ENCODE measurements at regions of chr1 and their contacts with region 1.

Region 1: GRCh38 chr1:12434174-12434573 is 183.8 kb downstream of the DHRS3 start:
- DNase-seq: peak; percentile 93
- ATAC-seq: peak; percentile 21
- H3K4me3 Mint-ChIP-seq: peak overlapping the region; percentile 65
- H3K27ac Mint-ChIP-seq: peak overlapping the region; percentile 96
- H3K4me1 Mint-ChIP-seq: peaks cover 87% of the 10 kb centered on the region
- H3K27me3 Mint-ChIP-seq: peaks cover 2% of the 10 kb centered on the region
- CTCF ChIP-seq: no peak

Region 2: GRCh38 chr1:12407050-12407961 is 26.9 kb before region 1 on chr1:
- CTCF ChIA-PET with region 1: interaction called, 13 read pairs
- POLR2A ChIA-PET with region 1: interaction called, 6 read pairs
- intact Hi-C with region 1: no loop called
- DNase-seq: peak; percentile 44
- ATAC-seq: peak; percentile 93
- H3K4me3 Mint-ChIP-seq: no peak overlapping the region
- H3K27ac Mint-ChIP-seq: peak overlapping the region; percentile 57
- H3K4me1 Mint-ChIP-seq: peaks cover 36% of the 10 kb centered on the region
- H3K27me3 Mint-ChIP-seq: no peaks in the 10 kb centered on the region
- CTCF ChIP-seq: peak; percentile 48

Region 3: GRCh38 chr1:12424087-12424529 is 10.1 kb before region 1 on chr1:
- CTCF ChIA-PET with region 1: interaction called, 5 read pairs
- POLR2A ChIA-PET with region 1: interaction called, 15 read pairs
- intact Hi-C with region 1: no loop called
- DNase-seq: no peak
- ATAC-seq: peak; percentile 37
- H3K4me3 Mint-ChIP-seq: no peak overlapping the region
- H3K27ac Mint-ChIP-seq: peak overlapping the region; percentile 48
- H3K4me1 Mint-ChIP-seq: peaks cover 48% of the 10 kb centered on the region
- H3K27me3 Mint-ChIP-seq: no peaks in the 10 kb centered on the region
- CTCF ChIP-seq: no peak

Region 4: DNA sequence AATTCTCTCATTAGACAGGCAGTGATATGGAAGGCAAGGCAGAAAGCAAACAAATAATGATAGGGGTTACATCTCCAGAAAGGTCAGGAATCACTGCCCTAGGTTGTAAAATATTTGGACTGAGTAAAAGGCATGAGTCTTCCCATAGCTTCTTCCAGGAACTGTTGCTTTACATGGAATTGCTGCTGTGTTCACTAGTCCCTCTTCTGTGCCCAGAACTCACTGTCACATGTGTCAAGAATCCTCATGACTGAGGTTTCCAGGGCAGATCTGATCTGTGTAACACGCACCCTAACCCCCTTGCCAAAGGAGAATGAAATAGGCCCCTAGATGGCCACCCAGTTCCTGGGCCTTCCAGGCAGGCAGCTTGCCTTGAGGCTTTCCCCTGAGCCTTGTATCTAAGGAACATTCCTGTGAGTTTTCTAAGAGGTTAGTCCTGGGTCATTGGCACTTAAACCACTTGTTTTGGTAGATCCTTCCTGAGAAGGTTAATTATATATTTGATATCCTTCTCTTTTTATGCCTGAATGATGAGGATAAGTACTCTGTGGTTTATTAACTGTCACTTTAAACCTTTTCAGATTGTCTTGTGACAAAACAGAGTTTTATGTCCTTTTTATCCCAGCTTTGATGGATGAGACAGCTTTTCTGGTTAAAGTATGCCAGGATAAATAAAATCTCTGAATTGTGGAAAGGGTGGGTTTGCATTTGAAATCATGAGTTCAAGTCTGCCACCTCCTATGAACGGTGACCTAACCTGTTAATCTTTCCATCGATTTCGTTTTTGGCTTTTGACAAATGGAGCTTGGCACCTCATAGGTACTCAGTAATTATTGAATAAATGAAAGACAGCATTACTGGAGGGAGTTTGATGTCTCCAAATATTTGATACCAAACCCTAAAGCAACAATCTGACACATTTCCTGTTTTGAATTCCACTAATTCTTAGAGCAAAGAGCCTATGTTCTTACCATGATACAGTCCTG is 20.5 kb after region 1 on chr1:
- CTCF ChIA-PET with region 1: interaction called, 88 read pairs
- POLR2A ChIA-PET with region 1: interaction called, 141 read pairs
- intact Hi-C with region 1: loop called (anchors 1 kb)
- DNase-seq: no peak
- ATAC-seq: no peak
- H3K4me3 Mint-ChIP-seq: peak overlapping the region; percentile 10
- H3K27ac Mint-ChIP-seq: peak overlapping the region; percentile 94
- H3K4me1 Mint-ChIP-seq: peaks cover 87% of the 10 kb centered on the region
- H3K27me3 Mint-ChIP-seq: no peaks in the 10 kb centered on the region
- CTCF ChIP-seq: no peak

Region 5: GRCh38 chr1:12477936-12478611 is 43.9 kb after region 1 on chr1:
- CTCF ChIA-PET with region 1: interaction called, 6 read pairs
- POLR2A ChIA-PET with region 1: interaction called, 49 read pairs
- intact Hi-C with region 1: loop called (anchors 2 kb)
- DNase-seq: peak; percentile 66
- ATAC-seq: peak; percentile 39
- H3K4me3 Mint-ChIP-seq: peak overlapping the region; percentile 40
- H3K27ac Mint-ChIP-seq: peak overlapping the region; percentile 95
- H3K4me1 Mint-ChIP-seq: peaks cover 88% of the 10 kb centered on the region
- H3K27me3 Mint-ChIP-seq: no peaks in the 10 kb centered on the region
- CTCF ChIP-seq: no peak